Tibial artery (tissue), 4 donors: ENCODE measurements at regions of chr16 and their contacts with region 1.

Region 1: DNA sequence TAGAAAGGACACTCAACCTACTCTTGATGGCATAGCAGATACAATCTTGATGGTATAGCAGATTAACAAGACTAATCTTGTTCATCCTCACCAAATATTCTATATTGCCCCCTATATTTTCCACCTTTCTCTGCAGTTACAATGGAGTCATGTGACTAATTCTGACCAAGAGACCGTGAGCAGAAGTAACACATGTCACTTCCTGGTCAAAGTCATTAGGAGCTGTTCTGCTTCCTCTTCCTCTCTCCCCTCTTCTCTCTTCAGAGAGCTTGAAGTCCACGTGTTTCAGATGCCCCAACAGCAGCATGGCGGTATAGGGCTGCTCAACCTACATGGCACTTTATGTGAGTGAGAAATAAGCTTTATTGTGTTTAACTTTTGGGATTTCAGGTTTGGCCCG is 55.3 kb upstream of the ERCC4 start:
- DNase-seq: no peak
- H3K4me3 ChIP-seq: no peak overlapping the region
- H3K27ac ChIP-seq: no peak overlapping the region
- H3K4me1 ChIP-seq: peaks cover 0 to 9% (median 1%) of the 10 kb centered on the region in 4 donors
- H3K27me3 ChIP-seq: no peaks in the 10 kb centered on the region
- CTCF ChIP-seq: no peak

Region 2: GRCh38 chr16:12188061-12188934 is 1676.4 kb before region 1 on chr16:
- intact Hi-C with region 1: no loop called
- DNase-seq: no peak
- H3K4me3 ChIP-seq: no peak overlapping the region
- H3K27ac ChIP-seq: peak overlapping the region in 1 of 2 donors; percentile 23
- H3K4me1 ChIP-seq: peaks cover 0 to 18% (median 12%) of the 10 kb centered on the region in 4 donors
- H3K27me3 ChIP-seq: no peaks in the 10 kb centered on the region
- CTCF ChIP-seq: no peak

Region 3: GRCh38 chr16:13733546-13733945 is 131.1 kb before region 1 on chr16:
- intact Hi-C with region 1: no loop called
- DNase-seq: no peak
- H3K4me3 ChIP-seq: no peak overlapping the region
- H3K27ac ChIP-seq: no peak overlapping the region
- H3K4me1 ChIP-seq: no peaks in the 10 kb centered on the region
- H3K27me3 ChIP-seq: peaks cover 0 to 2% of the 10 kb centered on the region in 2 donors
- CTCF ChIP-seq: no peak

Region 4: DNA sequence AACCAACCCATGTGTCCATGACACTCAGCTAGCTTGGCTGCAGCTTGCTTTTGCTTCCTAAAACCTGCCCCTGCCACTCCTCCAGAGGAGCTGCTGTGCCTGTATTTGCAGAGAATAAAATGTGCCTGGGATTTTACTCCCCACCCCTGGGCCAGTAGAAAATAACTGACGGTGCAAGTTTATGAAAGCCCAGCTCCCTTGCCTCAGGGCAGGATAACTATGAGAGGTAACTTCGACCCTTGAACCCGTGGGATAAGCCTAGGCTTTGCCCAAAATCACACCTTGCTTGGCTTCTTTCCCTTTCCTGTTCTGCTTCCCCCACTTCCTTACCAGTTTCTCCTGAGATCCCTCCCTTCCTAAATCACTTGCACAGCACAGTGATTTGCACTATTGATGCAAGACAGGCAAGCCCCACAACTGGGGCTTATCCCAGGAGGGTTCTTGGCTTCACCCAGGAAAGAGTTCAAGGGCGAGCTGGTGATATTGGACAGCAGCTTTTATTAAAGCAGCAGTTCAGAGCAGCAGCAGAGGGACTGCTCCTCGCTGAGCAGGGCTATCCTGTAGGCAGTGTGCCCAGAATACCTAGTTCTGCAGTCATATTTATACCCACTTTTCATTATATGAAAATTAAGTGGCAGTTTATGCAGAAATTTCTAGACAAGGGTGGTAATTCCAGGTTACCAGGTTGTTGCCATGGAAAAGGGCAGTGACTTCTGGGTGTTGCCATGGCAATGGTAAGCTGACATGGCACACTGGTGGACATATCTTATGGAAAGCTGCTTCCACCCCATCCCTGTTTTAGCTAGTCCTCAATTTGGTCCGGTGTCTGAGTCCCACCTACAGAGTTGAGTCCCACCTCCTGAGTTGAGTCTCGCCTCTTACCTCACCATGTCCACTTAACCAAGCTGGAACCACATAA is 48.9 kb after region 1 on chr16:
- intact Hi-C with region 1: loop called (anchors 2 kb)
- DNase-seq: no peak
- H3K4me3 ChIP-seq: no peak overlapping the region
- H3K27ac ChIP-seq: peak overlapping the region in 1 of 2 donors; percentile 26
- H3K4me1 ChIP-seq: peaks cover 0 to 22% (median 7%) of the 10 kb centered on the region in 4 donors
- H3K27me3 ChIP-seq: no peaks in the 10 kb centered on the region
- CTCF ChIP-seq: no peak

Region 5: DNA sequence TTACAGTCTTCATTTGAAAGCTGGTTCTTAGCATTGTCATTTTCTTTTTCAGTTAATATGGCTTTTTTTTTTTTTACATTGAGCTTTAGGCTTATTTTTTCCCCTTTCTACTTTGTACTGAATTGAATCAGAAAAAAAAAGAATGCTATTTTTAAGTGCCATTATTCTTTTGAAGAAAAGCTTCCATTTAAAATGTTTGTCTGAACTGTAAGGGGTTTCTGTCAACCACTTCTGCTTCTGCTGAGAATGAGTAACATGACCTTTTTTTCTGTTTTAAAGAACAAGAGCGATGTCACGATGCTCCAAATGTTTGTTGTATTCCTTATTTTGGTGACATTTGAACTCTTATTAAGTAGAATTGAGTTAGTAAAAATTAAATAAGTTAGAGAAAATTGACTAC is 256.5 kb after region 1 on chr16:
- intact Hi-C with region 1: no loop called
- DNase-seq: no peak
- H3K4me3 ChIP-seq: no peak overlapping the region
- H3K27ac ChIP-seq: no peak overlapping the region
- H3K4me1 ChIP-seq: peaks cover 0 to 26% (median 16%) of the 10 kb centered on the region in 4 donors
- H3K27me3 ChIP-seq: no peaks in the 10 kb centered on the region
- CTCF ChIP-seq: no peak